ENCODE measurements at regions of chr3 and their contacts with region 1.

Region 1: GRCh38 chr3:159804726-159805410 is 183.8 kb upstream of the IL12A start:
- DNase-seq: peak; percentile 73
- H3K4me3 ChIP-seq: no peak overlapping the region
- H3K27ac ChIP-seq: no peak overlapping the region
- H3K4me1 ChIP-seq: no peaks in the 10 kb centered on the region
- H3K27me3 ChIP-seq: no peaks in the 10 kb centered on the region
- CTCF ChIP-seq: peak; percentile 93

Region 2: DNA sequence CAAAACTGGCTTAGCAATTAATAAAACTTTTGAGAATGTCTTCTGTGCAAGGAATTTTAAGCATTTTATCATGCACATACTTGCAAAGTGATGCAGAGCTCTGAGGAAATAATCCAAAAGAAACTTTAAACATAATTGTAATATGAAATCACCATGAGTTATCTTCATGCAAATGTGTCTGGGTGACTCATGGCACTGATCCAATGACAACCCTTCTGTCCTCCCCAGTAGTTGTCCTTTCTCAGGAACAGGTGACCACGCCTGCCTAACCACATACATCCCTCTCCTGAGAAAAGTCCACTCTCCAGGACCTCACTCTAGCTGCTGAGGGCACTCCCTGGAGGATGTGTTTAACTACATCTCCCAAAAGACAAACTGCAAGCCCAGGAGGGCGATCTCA is 346.9 kb before region 1 on chr3:
- CTCF ChIA-PET with region 1: no interaction called
- POLR2A ChIA-PET with region 1: no interaction called
- intact Hi-C with region 1: loop called (anchors 1 kb)
- DNase-seq: peak; percentile 92 to 96
- H3K4me3 ChIP-seq: no peak overlapping the region
- H3K27ac ChIP-seq: peak overlapping the region; percentile 63
- H3K4me1 ChIP-seq: peaks cover 25% of the 10 kb centered on the region
- H3K27me3 ChIP-seq: no peaks in the 10 kb centered on the region
- CTCF ChIP-seq: no peak

Region 3: GRCh38 chr3:159616212-159616825 is 188.5 kb before region 1 on chr3:
- CTCF ChIA-PET with region 1: interaction called, 6 read pairs
- POLR2A ChIA-PET with region 1: no interaction called
- intact Hi-C with region 1: loop called (anchors 1 kb)
- DNase-seq: peak; percentile 43 to 69
- H3K4me3 ChIP-seq: no peak overlapping the region
- H3K27ac ChIP-seq: no peak overlapping the region
- H3K4me1 ChIP-seq: peaks cover 16% of the 10 kb centered on the region
- H3K27me3 ChIP-seq: no peaks in the 10 kb centered on the region
- CTCF ChIP-seq: peak; percentile 80

Region 4: GRCh38 chr3:159781867-159782266 is 23.0 kb before region 1 on chr3:
- CTCF ChIA-PET with region 1: interaction called, 18 read pairs
- POLR2A ChIA-PET with region 1: interaction called, 14 read pairs
- intact Hi-C with region 1: no loop called
- DNase-seq: no peak
- H3K4me3 ChIP-seq: no peak overlapping the region
- H3K27ac ChIP-seq: no peak overlapping the region
- H3K4me1 ChIP-seq: peaks cover 32% of the 10 kb centered on the region
- H3K27me3 ChIP-seq: no peaks in the 10 kb centered on the region
- CTCF ChIP-seq: peak; percentile 56; the same call in 1 of the 2 replicates

Region 5: DNA sequence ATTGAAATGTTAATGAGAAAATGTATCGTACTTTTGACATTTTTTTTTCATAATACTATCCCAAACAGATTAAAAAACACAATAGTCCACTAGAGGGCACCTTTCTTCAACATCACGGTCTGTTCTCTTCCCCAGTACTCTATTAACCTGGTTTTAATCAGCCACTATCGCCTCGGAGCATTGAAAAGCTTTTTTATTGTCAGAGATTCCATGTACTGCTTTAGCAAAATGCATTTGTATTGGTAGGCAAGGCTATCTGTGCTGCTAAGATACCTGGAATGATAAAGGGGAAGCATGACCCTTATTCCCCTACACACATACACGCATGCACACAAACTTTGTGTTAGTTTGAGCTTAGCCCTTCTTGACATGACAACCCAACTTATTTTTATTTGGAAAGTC is 23.7 kb after region 1 on chr3:
- CTCF ChIA-PET with region 1: no interaction called
- POLR2A ChIA-PET with region 1: interaction called, 11 read pairs
- intact Hi-C with region 1: no loop called
- DNase-seq: no peak
- H3K4me3 ChIP-seq: no peak overlapping the region
- H3K27ac ChIP-seq: no peak overlapping the region
- H3K4me1 ChIP-seq: peaks cover 39% of the 10 kb centered on the region
- H3K27me3 ChIP-seq: no peaks in the 10 kb centered on the region
- CTCF ChIP-seq: peak; percentile 76

Measured in PC-9 (cell line).